AG04449 (cell line): ENCODE measurements at regions of chr5 and their contacts with region 1.

Region 1: GRCh38 chr5:54867310-54867944 is 118.0 kb downstream of the ESM1 start:
- DNase-seq: no peak
- H3K4me3 ChIP-seq: no peak overlapping the region
- CTCF ChIP-seq: peak; percentile 9

Region 2: DNA sequence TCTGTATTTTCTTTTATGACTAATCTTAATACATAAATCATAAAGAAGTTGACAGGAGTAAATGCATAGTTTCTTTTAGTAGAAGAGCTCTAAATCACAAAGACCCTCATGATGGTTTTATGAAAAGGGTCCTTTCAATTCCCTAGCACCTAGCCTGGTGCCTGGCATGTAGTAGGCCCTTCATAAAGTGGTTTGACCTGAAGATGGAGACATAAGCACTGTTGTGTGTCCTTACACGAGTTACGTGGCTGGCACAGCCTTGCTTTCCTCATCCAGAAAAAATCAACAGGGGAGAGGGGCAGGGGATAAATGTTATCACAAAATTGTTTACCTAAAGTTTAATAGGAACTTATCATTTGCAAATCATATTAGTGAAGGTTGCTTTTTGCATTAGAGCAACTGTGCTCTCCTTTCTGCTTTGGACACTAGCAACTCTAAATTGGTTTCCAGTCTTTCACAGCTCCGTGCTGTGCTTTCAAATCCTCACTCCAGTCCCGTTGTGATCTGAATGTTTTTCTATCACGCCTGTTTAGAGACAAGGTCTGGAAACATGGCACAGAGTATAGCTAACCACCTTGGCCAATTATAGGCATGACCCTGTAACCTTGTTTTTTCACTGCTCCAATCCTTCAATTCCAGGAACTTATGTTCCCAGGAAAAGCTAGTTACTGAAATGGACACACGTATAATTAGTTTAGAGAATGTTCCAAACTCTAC is 612.8 kb before region 1 on chr5:
- CTCF ChIA-PET with region 1: interaction called, 11 read pairs
- POLR2A ChIA-PET with region 1: no interaction called
- DNase-seq: no peak
- H3K4me3 ChIP-seq: no peak overlapping the region
- CTCF ChIP-seq: no peak

Region 3: GRCh38 chr5:54524704-54525103 is 342.7 kb before region 1 on chr5:
- CTCF ChIA-PET with region 1: interaction called, 137 read pairs
- POLR2A ChIA-PET with region 1: no interaction called
- DNase-seq: no peak
- H3K4me3 ChIP-seq: no peak overlapping the region
- CTCF ChIP-seq: no peak

Region 4: GRCh38 chr5:54825005-54825404 is 42.4 kb before region 1 on chr5:
- CTCF ChIA-PET with region 1: no interaction called
- POLR2A ChIA-PET with region 1: no interaction called
- DNase-seq: no peak
- H3K4me3 ChIP-seq: no peak overlapping the region
- CTCF ChIP-seq: no peak

Region 5: DNA sequence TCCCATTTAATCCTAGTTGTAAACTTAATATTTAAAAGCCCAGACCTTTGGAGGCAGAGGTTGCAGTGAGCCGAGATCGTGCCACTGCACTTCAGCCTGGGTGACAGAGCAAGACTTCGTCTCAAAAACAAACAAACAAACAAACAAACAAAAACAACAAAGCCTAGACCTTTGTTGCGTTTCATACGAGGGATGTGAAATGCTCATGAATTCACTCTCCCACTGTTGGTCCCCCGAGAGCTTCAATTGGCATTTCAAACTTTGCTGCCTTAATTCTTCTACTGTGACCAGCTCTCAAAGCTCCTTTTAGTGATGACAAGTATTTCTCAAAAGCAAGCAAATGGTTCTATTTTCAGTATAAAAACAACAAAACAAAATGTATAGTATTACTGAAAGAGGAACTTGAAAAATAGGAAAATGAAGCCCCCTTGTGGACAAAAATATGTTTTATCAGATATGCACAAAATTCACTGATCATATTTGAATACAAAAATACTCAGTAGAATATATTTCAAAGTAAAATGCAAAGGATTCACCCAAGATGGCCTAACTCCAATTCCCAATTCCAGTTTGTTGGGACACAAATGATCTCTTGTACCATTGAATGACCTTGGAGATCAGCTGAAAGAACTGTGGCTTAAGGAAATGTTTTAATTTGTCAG is 22.4 kb before region 1 on chr5:
- CTCF ChIA-PET with region 1: interaction called, 33 read pairs
- POLR2A ChIA-PET with region 1: no interaction called
- DNase-seq: no peak
- H3K4me3 ChIP-seq: no peak overlapping the region
- CTCF ChIP-seq: no peak

Region 6: DNA sequence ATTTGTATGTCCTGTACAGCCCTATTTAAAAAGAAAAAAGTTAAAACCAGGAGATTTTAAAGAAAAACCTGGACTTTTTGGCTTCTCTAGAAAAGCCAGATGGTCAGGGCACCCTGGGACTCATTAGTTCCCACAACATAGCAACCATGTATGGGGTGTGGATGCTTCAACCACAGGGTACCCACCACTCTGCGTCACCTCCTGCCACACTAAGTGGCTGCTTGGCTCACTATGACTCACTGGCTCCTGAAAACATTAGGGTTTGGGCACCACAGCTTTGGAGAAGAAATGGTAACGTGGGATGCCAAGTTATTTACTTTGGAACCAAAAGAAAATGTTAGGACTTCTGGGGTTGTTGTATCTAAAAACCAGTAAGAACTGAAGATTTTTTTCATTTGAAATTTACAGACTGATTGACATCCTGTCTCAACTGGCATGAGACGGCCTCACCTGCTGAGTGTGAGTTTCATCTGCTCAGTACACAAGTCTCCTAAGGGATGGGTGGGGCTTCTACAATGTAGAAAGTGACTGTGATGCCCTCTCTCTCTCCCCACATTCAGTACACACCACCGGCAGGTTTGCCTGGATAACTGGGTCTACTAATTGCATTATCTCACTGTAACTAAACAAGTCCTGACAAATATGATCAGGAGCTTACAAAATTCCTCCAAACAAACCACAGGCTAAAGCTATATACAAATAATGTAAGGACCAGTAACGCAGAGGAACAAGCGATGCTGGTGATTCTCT is 14.0 kb after region 1 on chr5:
- CTCF ChIA-PET with region 1: interaction called, 50 read pairs
- POLR2A ChIA-PET with region 1: no interaction called
- DNase-seq: no peak
- H3K4me3 ChIP-seq: no peak overlapping the region
- CTCF ChIP-seq: no peak

Region 7: DNA sequence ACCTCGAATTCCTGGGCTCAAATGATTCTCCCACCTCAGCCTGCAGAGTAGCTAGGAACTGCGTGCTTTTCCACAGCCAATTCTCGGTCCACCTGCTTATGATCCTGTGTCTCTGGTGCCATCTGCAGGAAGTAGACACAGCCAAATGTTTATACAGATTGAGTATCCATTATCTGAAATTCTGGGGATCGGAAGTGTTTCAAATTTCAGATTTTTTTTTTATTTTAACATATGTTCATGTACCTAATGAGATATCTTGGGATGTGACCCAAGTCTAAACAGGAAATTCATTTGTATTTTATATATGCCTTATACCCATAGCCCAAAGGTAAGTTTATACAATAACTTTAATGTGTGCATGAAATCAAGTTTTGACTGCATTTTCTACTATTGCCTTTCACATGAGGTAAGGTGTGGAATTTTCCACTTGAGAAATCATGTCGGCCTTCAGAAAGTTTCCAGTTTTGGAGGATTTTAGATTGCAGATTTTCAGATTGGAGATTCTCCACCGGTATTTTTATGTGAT is 28.5 kb after region 1 on chr5:
- CTCF ChIA-PET with region 1: interaction called, 17 read pairs
- POLR2A ChIA-PET with region 1: no interaction called
- DNase-seq: no peak
- H3K4me3 ChIP-seq: no peak overlapping the region
- CTCF ChIP-seq: peak; percentile 49